Left colon (tissue), 2 donors: ENCODE measurements at regions of chr9 and their contacts with region 1.

Region 1: GRCh38 chr9:134171316-134172197 is 7.2 kb upstream of the RNU6ATAC start:
- DNase-seq: no peak
- ATAC-seq: no peak

Region 2: GRCh38 chr9:134434894-134435506 is 263.4 kb after region 1 on chr9:
- intact Hi-C with region 1: loop called in 1 of 2 experiments (anchors 5 kb)
- DNase-seq: peak; percentile 90 to 95
- ATAC-seq: peak; percentile 75

Region 3: GRCh38 chr9:134443168-134444037 is 271.8 kb after region 1 on chr9:
- intact Hi-C with region 1: loop called (anchors 2 to 5 kb)
- DNase-seq: peak; percentile 85 to 90
- ATAC-seq: peak; percentile 83

Region 4: DNA sequence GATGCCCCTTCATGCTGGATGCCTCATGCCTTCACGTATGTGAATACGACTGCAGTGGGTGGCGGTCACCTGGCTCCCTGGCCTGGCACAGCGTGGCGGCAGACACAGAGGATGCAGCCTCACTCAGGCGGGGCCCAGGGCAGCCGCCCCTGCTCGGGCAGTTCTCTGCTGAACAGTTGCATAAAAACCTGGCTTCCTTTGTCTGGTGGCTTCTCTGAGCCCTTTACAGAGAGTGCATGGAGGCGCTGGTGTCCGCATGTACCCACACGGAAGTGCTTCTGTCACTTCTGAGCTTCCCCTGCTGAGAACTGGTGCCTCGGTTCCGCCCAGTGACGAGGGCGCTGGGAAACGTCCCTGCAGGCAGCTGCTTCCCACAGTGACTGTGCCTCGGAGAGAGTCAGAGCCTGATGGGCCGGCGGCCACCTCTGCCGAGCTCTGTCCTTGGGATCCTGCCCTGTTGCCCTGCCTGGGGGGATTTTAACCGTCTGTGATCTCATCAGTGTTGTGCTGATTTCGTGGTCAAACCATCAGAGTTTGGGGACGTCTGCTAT is 316.8 kb after region 1 on chr9:
- intact Hi-C with region 1: no loop called
- DNase-seq: peak in 1 of 2 donors; percentile 24
- ATAC-seq: no peak

Region 5: DNA sequence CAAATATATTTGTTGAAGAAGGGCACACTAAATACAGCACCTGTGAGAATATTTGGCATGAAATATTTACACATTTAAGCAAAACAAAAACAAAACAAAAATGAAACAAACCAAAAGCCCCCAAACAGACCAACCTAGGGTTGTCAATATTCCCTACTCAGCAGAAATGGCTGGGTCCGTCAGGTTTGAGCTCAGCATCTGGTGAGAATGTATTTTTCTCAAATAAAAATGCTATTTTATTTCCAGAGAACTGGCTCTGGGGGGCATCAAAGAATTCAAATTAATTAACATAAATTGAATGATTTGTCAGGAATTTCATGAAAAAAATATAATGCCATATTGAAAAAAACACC is 327.2 kb after region 1 on chr9:
- intact Hi-C with region 1: no loop called
- DNase-seq: no peak
- ATAC-seq: no peak